ENCODE measurements at regions of chr4 and their contacts with region 1.

Region 1: GRCh38 chr4:87270144-87270543 is 49.7 kb upstream of the KLHL8 start:
- DNase-seq: peak; percentile 62
- ATAC-seq: peak; percentile 93
- H3K4me3 ChIP-seq: peak overlapping the region in 1 of 3 experiments; percentile 1; a peak in 1 of 6 replicates
- H3K27ac ChIP-seq: no peak overlapping the region
- H3K4me1 ChIP-seq: peaks cover 18% of the 10 kb centered on the region
- H3K27me3 ChIP-seq: peaks cover 0 to 3% of the 10 kb centered on the region in 2 experiments; a peak in 1 of 5 replicates
- CTCF ChIP-seq: peak; percentile 82
- EP300 ChIP-seq: no peak
- POLR2A ChIP-seq: no peak
- RAD21 ChIP-seq: peak; percentile 87

Region 2: GRCh38 chr4:87281603-87282002 is 11.5 kb after region 1 on chr4:
- CTCF ChIA-PET with region 1: no interaction called
- POLR2A ChIA-PET with region 1: no interaction called
- in situ Hi-C with region 1: no loop called
- intact Hi-C with region 1: no loop called
- DNase-seq: no peak
- ATAC-seq: no peak
- H3K4me3 ChIP-seq: no peak overlapping the region
- H3K27ac ChIP-seq: no peak overlapping the region
- H3K4me1 ChIP-seq: peaks cover 31% of the 10 kb centered on the region
- H3K27me3 ChIP-seq: no peaks in the 10 kb centered on the region
- CTCF ChIP-seq: no peak
- EP300 ChIP-seq: no peak
- POLR2A ChIP-seq: no peak
- RAD21 ChIP-seq: no peak

Region 3: GRCh38 chr4:87353592-87353991 is 83.4 kb after region 1 on chr4:
- CTCF ChIA-PET with region 1: interaction called, 3 read pairs
- POLR2A ChIA-PET with region 1: no interaction called
- in situ Hi-C with region 1: no loop called
- intact Hi-C with region 1: loop called (anchors 5 kb)
- DNase-seq: peak; percentile 29
- ATAC-seq: peak; percentile 80
- H3K4me3 ChIP-seq: no peak overlapping the region
- H3K27ac ChIP-seq: no peak overlapping the region
- H3K4me1 ChIP-seq: no peaks in the 10 kb centered on the region
- H3K27me3 ChIP-seq: no peaks in the 10 kb centered on the region
- CTCF ChIP-seq: peak; percentile 65
- EP300 ChIP-seq: no peak
- POLR2A ChIP-seq: no peak
- RAD21 ChIP-seq: peak; percentile 36; the same call in 1 of the 2 replicates

Measured in HepG2 (cell line).